SK-N-SH (cell line): ENCODE measurements at regions of chr14 and their contacts with region 1.

Region 1: GRCh38 chr14:91373591-91374254 is 43.9 kb downstream of the CCDC88C start:
- DNase-seq: peak; percentile 55
- H3K4me3 ChIP-seq: no peak overlapping the region
- H3K27ac ChIP-seq: peak overlapping the region in 1 of 2 experiments; percentile 72; a peak in 2 of 4 replicates
- H3K4me1 ChIP-seq: peaks cover 16 to 91% of the 10 kb centered on the region in 2 experiments
- H3K27me3 ChIP-seq: no peaks in the 10 kb centered on the region
- CTCF ChIP-seq: no peak
- EP300 ChIP-seq: no peak
- RAD21 ChIP-seq: no peak

Region 2: GRCh38 chr14:91354979-91355685 is 18.6 kb before region 1 on chr14:
- CTCF ChIA-PET with region 1: interaction called, 16 read pairs
- POLR2A ChIA-PET with region 1: no interaction called
- DNase-seq: peak; percentile 75
- H3K4me3 ChIP-seq: no peak overlapping the region
- H3K27ac ChIP-seq: no peak overlapping the region
- H3K4me1 ChIP-seq: peaks cover 0 to 8% of the 10 kb centered on the region in 2 experiments; a peak in 1 of 4 replicates
- H3K27me3 ChIP-seq: no peaks in the 10 kb centered on the region
- CTCF ChIP-seq: peak; percentile 34
- EP300 ChIP-seq: no peak
- RAD21 ChIP-seq: peak; percentile 42

Region 3: DNA sequence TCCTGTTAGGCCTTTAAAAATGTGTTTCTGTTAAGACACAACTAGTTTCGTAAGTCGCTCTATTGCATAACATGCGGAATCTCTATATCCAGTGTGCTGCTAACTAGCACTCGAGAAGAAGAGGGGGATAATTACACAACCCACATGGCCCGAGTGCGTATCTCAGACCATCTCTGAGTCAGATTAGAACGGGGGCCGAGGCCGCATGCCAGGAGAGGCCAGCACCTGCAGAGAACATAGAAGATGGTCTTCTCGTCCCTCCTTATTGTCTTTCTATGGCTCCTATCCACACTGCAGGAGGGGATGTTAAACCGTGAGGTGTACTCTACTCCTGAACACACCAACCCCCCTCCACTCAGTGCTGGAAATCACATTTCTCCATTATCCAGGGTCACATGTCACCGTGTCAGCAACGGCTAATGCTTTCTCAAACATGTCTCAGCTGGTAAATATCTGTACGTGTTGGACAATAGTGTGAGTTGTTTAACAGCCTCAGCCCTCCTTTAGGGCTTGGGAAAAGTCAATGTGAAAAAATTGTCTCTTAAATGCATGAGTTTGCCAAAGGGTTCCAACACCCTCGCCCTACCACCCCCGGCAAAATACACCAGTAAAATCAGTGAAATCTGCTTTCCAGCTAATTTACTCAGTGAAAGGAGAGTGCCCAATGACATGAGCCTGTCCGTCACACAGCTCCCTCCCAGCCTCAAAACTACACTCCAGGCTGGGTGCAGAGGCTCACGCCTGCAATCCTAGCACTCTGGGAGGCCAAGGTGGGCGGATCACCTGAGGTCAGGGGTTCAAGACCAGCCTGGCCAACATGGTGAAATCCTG is 12.3 kb before region 1 on chr14:
- CTCF ChIA-PET with region 1: interaction called, 16 read pairs
- POLR2A ChIA-PET with region 1: no interaction called
- DNase-seq: no peak
- H3K4me3 ChIP-seq: no peak overlapping the region
- H3K27ac ChIP-seq: no peak overlapping the region
- H3K4me1 ChIP-seq: peaks cover 0 to 5% of the 10 kb centered on the region in 2 experiments; a peak in 2 of 4 replicates
- H3K27me3 ChIP-seq: no peaks in the 10 kb centered on the region
- CTCF ChIP-seq: no peak
- EP300 ChIP-seq: no peak
- RAD21 ChIP-seq: no peak

Region 4: GRCh38 chr14:91418387-91419043 is 44.8 kb after region 1 on chr14:
- CTCF ChIA-PET with region 1: interaction called, 29 read pairs
- POLR2A ChIA-PET with region 1: interaction called, 5 read pairs
- DNase-seq: peak; percentile 78
- H3K4me3 ChIP-seq: peak overlapping the region; percentile 52 to 58
- H3K27ac ChIP-seq: no peak overlapping the region
- H3K4me1 ChIP-seq: peaks cover 0 to 22% of the 10 kb centered on the region in 2 experiments; a peak in 2 of 4 replicates
- H3K27me3 ChIP-seq: peaks cover 15% of the 10 kb centered on the region
- CTCF ChIP-seq: peak; percentile 98
- EP300 ChIP-seq: no peak
- RAD21 ChIP-seq: peak; percentile 91

Region 5: GRCh38 chr14:91510174-91511042 is 136.7 kb after region 1 on chr14 and contains the start of gene PPP4R3A:
- CTCF ChIA-PET with region 1: no interaction called
- POLR2A ChIA-PET with region 1: no interaction called
- DNase-seq: peak; percentile 98
- H3K4me3 ChIP-seq: peak within 1 kb of the TSS; percentile 84 to 89
- H3K27ac ChIP-seq: peak within 1 kb of the TSS; percentile 97 to 98
- H3K4me1 ChIP-seq: peaks cover 4 to 5% of the 10 kb centered on the region in 2 experiments; a peak in 2 of 4 replicates
- H3K27me3 ChIP-seq: peaks cover 5% of the 10 kb centered on the region; the same call in 1 of the 2 replicates
- CTCF ChIP-seq: no peak
- EP300 ChIP-seq: no peak; a peak in 1 of 4 replicates
- RAD21 ChIP-seq: no peak
- polyA plus RNA-seq, gene PPP4R3A: 32.1 and 34.9 TPM in 2 replicates